Left colon (tissue), 2 donors: ENCODE measurements at regions of chr9 and their contacts with region 1.

Region 1: GRCh38 chr9:126558051-126558665 is 55.6 kb upstream of the LMX1B start:
- DNase-seq: peak in 1 of 2 donors; percentile 59
- ATAC-seq: peak; percentile 82

Region 2: DNA sequence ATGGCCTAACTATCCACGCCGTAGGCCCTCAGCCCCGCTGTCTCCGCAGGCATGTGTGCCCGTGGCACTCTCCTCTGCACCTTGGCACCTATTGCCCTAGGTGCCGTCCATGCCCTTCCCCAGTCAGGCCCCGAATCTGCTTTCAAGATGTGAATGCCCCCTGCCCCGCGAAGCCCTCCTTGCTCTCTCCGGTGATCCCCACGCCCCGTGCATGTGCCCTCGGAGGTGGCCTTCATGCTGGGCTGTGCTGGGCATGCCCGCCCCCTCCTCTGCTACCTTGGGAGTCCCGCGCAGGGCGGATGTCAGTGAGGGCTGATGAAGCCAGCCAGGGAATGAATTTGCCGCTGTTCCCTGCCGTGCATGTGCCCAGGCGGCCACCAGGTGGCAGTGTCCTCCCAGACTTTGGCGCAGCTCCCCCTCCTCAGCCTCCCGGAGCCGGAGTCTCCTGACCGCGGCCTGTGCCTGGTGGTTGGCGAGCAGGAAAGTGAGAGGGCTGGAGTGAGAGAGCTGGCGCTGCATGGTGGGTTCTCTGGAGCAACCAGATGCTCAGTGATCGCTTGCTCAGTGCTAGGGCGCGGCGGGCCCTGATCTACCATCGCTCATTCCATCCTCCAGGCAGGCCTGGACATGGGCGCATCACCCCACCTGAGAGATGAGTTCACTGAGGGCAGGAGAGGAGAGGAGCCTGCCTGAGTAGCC is 57.3 kb before region 1 on chr9:
- intact Hi-C with region 1: loop called (anchors 5 kb)
- DNase-seq: peak; percentile 48 to 69
- ATAC-seq: peak; percentile 54

Region 3: GRCh38 chr9:126636983-126637798 is 79.0 kb after region 1 on chr9:
- intact Hi-C with region 1: no loop called
- DNase-seq: no peak
- ATAC-seq: no peak